Activated CD8-positive, alpha-beta T cell treated with anti-CD3 and anti-CD28 coated beads for 36 hours (primary cell): ENCODE measurements at regions of chr18 and their contacts with region 1.

Region 1: DNA sequence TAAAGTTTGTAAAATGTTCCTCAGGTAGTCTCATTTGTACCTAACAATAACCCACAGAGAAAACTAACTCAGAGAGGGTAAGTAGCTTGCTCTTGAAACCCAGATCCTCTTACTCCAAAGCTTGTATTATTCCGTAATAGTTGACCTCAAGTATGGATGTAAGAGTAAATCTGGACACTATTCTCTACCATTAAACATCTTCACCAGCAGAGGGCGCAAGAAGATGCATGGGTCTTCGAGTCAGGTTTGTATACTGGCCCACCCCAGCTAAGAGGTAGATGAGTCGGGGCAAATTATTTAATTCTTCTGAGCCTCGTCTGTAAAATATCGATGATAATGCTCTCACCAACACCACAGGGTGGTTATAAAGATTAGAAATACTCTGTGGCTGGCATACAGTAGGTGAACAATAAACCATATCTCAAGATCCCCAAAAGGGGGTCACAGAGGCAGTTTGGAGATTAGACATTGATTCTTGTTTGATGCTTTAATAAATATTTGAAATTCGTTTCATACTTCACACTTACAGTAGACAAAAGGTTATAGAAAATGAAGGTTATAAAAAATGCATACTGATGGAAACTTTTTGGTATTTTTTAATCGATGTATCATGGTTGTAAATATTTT is 3.5 kb upstream of the CABLES1 start:
- DNase-seq: peak; percentile 68
- ATAC-seq: peak; percentile 63
- H3K4me3 Mint-ChIP-seq: no peak overlapping the region
- H3K27ac Mint-ChIP-seq: no peak overlapping the region
- H3K4me1 Mint-ChIP-seq: peaks cover 10% of the 10 kb centered on the region
- H3K27me3 Mint-ChIP-seq: peaks cover 27% of the 10 kb centered on the region
- CTCF ChIP-seq: peak; percentile 85

Region 2: DNA sequence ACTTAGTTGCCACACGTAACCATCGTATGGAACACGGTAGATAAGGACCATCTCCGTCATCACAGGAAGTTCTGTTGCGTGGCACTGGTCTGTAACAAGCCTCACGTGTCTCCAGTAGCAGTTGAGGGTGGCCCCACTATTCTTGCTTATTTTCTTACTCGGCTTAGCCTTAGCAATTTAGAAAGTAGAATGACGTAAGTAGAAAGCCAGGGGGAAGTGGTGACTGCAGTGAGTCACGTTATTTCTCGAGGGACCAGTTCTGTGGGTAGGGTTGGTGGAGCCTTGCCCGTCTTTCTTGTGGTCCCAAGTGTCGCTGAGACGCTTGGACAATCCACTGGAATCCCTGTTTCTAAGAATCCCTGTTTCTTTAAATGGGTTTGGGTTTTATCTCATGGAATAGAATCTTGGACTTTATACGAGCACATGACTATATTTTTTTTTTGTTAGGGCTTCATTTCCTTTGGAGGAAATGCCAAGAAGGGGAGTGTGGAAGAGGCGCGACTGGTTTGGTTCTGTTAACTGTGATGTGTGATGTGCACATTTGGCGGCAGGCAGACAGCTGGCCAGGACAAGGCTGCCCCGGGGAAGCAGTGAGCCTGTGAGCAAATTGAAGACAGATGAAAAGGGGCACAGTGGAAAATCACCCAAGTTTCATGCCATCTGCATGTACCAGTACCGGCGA is 99.7 kb after region 1 on chr18:
- CTCF ChIA-PET with region 1: interaction called, 7 read pairs
- POLR2A ChIA-PET with region 1: no interaction called
- intact Hi-C with region 1: loop called (anchors 10 kb)
- DNase-seq: peak; percentile 92
- ATAC-seq: peak; percentile 89
- H3K4me3 Mint-ChIP-seq: peak overlapping the region; percentile 26
- H3K27ac Mint-ChIP-seq: peak overlapping the region; percentile 96
- H3K4me1 Mint-ChIP-seq: peaks cover 47% of the 10 kb centered on the region
- H3K27me3 Mint-ChIP-seq: no peaks in the 10 kb centered on the region
- CTCF ChIP-seq: no peak

Region 3: GRCh38 chr18:23356915-23357601 is 225.3 kb after region 1 on chr18:
- CTCF ChIA-PET with region 1: interaction called, 24 read pairs
- POLR2A ChIA-PET with region 1: no interaction called
- intact Hi-C with region 1: loop called (anchors 5 kb)
- DNase-seq: no peak
- ATAC-seq: no peak
- H3K4me3 Mint-ChIP-seq: no peak overlapping the region
- H3K27ac Mint-ChIP-seq: no peak overlapping the region
- H3K4me1 Mint-ChIP-seq: peaks cover 15% of the 10 kb centered on the region
- H3K27me3 Mint-ChIP-seq: no peaks in the 10 kb centered on the region
- CTCF ChIP-seq: no peak

Region 4: DNA sequence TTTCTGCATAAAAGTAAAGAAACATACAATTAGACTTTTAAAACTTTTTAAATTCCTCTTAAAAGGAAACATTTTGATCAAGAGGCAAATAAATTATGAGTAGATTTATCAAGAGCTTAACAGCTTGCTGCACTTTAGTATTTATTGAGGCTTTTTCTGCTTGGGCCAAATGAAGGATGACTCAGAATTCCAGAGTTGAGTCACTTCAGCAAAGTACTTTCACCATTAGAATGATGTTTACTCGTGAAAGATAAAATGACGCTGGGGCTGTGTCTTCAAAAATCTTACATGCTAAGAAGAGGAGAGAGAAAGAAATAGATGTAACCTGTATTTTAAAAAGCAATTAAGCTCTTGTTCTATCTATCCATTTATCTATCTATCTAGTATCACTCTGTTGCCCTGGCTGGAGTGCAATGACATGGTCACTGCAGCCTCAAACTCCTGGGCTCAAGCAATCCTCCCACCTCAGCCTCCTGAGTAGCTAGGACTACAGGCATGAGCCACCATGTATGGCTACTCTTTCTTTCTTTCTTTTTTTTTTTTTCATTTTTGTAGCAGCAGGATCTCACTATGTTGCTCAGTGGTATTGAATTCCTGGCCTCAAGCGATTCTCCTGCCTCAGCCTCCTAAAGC is 246.0 kb after region 1 on chr18:
- CTCF ChIA-PET with region 1: interaction called, 39 read pairs
- POLR2A ChIA-PET with region 1: interaction called, 3 read pairs
- intact Hi-C with region 1: loop called (anchors 5 kb)
- DNase-seq: no peak
- ATAC-seq: peak; percentile 84
- H3K4me3 Mint-ChIP-seq: no peak overlapping the region
- H3K27ac Mint-ChIP-seq: no peak overlapping the region
- H3K4me1 Mint-ChIP-seq: peaks cover 15% of the 10 kb centered on the region
- H3K27me3 Mint-ChIP-seq: no peaks in the 10 kb centered on the region
- CTCF ChIP-seq: no peak